ENCODE measurements at regions of chr3 and their contacts with region 1.

Region 1: GRCh38 chr3:8888301-8888915 is 74.9 kb downstream of the RAD18 start:
- DNase-seq: peak; percentile 91
- ATAC-seq: peak; percentile 81
- H3K4me3 ChIP-seq: no peak overlapping the region
- H3K27ac ChIP-seq: peak overlapping the region; percentile 98
- H3K4me1 ChIP-seq: peaks cover 33% of the 10 kb centered on the region
- H3K27me3 ChIP-seq: no peaks in the 10 kb centered on the region
- CTCF ChIP-seq: no peak
- POLR2A ChIP-seq: no peak
- RAD21 ChIP-seq: no peak

Region 2: GRCh38 chr3:8380904-8381704 is 507.3 kb before region 1 on chr3:
- CTCF ChIA-PET with region 1: no interaction called
- POLR2A ChIA-PET with region 1: no interaction called
- dilution Hi-C with region 1: no loop called
- in situ Hi-C with region 1: no loop called
- intact Hi-C with region 1: no loop called
- DNase-seq: no peak
- ATAC-seq: no peak
- H3K4me3 ChIP-seq: no peak overlapping the region
- H3K27ac ChIP-seq: no peak overlapping the region
- H3K4me1 ChIP-seq: no peaks in the 10 kb centered on the region; the same call in 1 of the 2 replicates
- H3K27me3 ChIP-seq: no peaks in the 10 kb centered on the region; the same call in 1 of the 2 replicates
- CTCF ChIP-seq: no peak
- POLR2A ChIP-seq: no peak
- RAD21 ChIP-seq: no peak

Region 3: DNA sequence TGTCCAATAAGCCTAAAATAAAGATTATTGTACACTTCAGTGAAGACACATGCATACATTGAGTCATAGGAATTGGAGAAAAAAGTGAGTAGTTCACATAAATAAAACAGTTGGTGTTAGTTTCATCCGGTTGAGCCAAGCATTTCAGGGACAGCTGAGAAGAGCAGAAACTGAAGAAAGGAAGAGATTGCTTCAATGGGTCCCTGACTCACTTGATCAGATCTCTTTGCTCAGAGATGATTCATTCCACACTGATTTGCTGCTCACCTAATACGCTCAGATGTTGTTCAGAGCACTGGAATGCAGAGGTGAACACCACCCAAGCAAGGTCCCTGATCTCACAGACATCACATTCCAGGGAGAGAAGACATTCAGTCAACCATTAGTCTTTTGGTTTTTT is 18.8 kb before region 1 on chr3:
- CTCF ChIA-PET with region 1: no interaction called
- POLR2A ChIA-PET with region 1: no interaction called
- dilution Hi-C with region 1: no loop called
- in situ Hi-C with region 1: no loop called
- intact Hi-C with region 1: loop called (anchors 1 kb)
- DNase-seq: peak; percentile 99
- ATAC-seq: peak; percentile 91
- H3K4me3 ChIP-seq: no peak overlapping the region
- H3K27ac ChIP-seq: peak overlapping the region; percentile 80
- H3K4me1 ChIP-seq: peaks cover 18% of the 10 kb centered on the region
- H3K27me3 ChIP-seq: no peaks in the 10 kb centered on the region
- CTCF ChIP-seq: no peak
- POLR2A ChIP-seq: no peak
- RAD21 ChIP-seq: 0 out of 2 replicates have a peak, but pooled peaks have one; percentile 5

Region 4: DNA sequence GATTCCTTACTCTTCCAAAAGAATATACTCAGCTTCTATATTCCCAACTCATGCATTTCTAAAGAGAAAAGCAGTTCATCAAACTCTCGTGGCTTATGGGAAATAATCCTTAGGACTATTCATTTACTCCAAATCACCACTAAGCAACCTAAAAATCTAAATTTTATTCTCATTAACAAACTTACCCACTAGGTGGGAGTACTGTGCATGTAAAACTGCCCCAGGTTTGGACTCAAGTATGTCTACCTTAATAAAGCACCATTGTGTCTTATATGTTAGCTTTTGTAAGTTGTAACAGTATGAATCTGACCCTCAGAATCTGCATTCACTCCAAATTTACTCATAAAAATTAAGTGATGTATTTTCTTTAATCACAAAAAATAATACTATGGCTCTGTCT is 49.6 kb after region 1 on chr3:
- CTCF ChIA-PET with region 1: no interaction called
- POLR2A ChIA-PET with region 1: interaction called, 3 read pairs
- dilution Hi-C with region 1: no loop called
- in situ Hi-C with region 1: no loop called
- intact Hi-C with region 1: loop called (anchors 2 kb)
- DNase-seq: peak; percentile 59
- ATAC-seq: peak; percentile 62
- H3K4me3 ChIP-seq: no peak overlapping the region
- H3K27ac ChIP-seq: no peak overlapping the region
- H3K4me1 ChIP-seq: peaks cover 11% of the 10 kb centered on the region; the same call in 1 of the 2 replicates
- H3K27me3 ChIP-seq: no peaks in the 10 kb centered on the region
- CTCF ChIP-seq: peak; percentile 50
- POLR2A ChIP-seq: no peak
- RAD21 ChIP-seq: peak; percentile 51

Region 5: DNA sequence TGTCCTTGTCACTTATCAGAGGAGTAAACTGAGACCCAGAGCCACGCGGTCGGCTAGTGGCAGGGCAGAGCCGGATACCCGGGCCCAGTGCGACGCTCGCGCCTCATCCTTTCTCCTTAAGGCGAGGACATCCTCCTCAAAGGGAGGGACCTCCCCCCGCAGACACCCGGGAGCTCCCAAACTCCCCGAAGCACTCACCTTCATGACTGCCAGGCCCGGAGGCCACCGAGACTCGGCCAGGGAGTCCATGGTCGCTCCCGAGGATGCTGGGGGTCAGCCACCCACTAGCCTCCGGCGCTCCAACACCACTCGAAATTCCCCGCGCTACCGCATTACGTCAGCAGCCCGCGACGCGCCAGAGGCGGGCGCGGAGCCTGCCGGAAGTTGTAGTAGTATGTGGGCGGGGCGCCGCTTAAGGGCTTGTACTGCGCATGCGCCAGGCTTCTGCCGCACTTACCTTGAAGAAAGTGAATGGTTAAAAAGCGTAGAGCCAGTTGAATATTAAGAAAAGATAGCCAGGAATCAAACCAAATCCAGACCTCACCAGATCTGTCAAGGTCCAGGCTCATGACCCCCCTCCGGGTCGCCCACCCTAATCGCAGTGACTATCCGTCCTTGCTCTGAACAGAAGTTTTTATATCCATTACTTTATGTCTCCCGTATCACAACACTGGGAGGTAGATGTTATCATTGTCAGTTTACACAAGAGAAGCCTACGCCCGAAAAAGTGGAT is 74.9 kb after region 1 on chr3 and contains the start of gene RAD18:
- CTCF ChIA-PET with region 1: no interaction called
- POLR2A ChIA-PET with region 1: no interaction called
- dilution Hi-C with region 1: no loop called
- in situ Hi-C with region 1: no loop called
- intact Hi-C with region 1: loop called (anchors 5 kb)
- DNase-seq: peak; percentile 89
- ATAC-seq: peak; percentile 97
- H3K4me3 ChIP-seq: peak within 1 kb of the TSS; percentile 78
- H3K27ac ChIP-seq: peak within 1 kb of the TSS; percentile 55
- H3K4me1 ChIP-seq: peaks cover 5% of the 10 kb centered on the region
- H3K27me3 ChIP-seq: 0 out of 2 replicates have a peak, but pooled peaks cover 2% of the 10 kb centered on the region
- CTCF ChIP-seq: no peak
- POLR2A ChIP-seq: peak; percentile 57
- RAD21 ChIP-seq: no peak
- total RNA-seq, gene RAD18: 17.2 and 22.2 TPM in 2 replicates

Region 6: GRCh38 chr3:9008550-9009255 is 120.3 kb after region 1 on chr3:
- CTCF ChIA-PET with region 1: no interaction called
- POLR2A ChIA-PET with region 1: no interaction called
- dilution Hi-C with region 1: no loop called
- in situ Hi-C with region 1: no loop called
- intact Hi-C with region 1: no loop called
- DNase-seq: no peak
- ATAC-seq: no peak
- H3K4me3 ChIP-seq: no peak overlapping the region
- H3K27ac ChIP-seq: no peak overlapping the region
- H3K4me1 ChIP-seq: no peaks in the 10 kb centered on the region
- H3K27me3 ChIP-seq: peaks cover 5% of the 10 kb centered on the region; the same call in 1 of the 2 replicates
- CTCF ChIP-seq: no peak
- POLR2A ChIP-seq: no peak
- RAD21 ChIP-seq: no peak

Region 7: DNA sequence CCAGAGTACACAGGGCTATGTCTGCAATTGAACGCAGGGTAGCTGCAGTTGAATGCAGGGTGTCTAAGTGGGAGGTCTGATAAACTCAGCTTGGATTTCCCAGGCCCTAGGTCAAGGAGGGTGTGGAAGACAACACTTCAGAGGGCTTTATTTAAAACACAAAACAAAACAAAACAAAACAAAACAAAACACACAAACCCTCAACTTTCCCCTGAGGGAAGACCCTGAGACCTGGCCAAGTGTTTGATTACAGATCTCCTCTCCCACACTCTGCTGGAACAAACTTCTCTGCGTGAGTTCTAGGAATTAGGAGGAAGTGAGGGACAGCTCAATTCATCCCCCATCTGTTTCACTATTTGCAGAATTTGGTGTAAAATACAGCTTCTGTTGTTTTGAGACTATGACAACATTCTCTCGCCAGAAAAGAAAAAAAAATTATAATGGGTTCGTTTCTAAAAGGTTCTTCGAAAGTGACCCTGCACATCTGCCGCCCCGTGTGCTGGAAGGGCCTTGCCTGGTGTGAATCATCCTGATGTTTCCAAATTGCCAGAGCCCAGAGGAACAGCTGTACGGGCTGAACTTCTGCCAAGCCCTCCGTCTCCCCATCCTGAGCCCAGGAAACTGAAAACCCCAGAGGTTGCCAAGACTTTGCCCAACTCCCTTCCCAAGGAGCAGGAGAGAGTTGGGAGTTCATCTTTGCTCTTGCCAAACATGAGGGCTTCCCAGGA is 148.2 kb after region 1 on chr3:
- CTCF ChIA-PET with region 1: no interaction called
- POLR2A ChIA-PET with region 1: no interaction called
- dilution Hi-C with region 1: no loop called
- in situ Hi-C with region 1: no loop called
- intact Hi-C with region 1: no loop called
- DNase-seq: peak; percentile 9
- ATAC-seq: peak; percentile 46
- H3K4me3 ChIP-seq: no peak overlapping the region
- H3K27ac ChIP-seq: no peak overlapping the region
- H3K4me1 ChIP-seq: no peaks in the 10 kb centered on the region
- H3K27me3 ChIP-seq: peaks cover 6% of the 10 kb centered on the region
- CTCF ChIP-seq: no peak
- POLR2A ChIP-seq: no peak
- RAD21 ChIP-seq: no peak

Region 8: GRCh38 chr3:9056581-9056980 is 168.2 kb after region 1 on chr3:
- CTCF ChIA-PET with region 1: no interaction called
- POLR2A ChIA-PET with region 1: no interaction called
- dilution Hi-C with region 1: no loop called
- in situ Hi-C with region 1: no loop called
- intact Hi-C with region 1: no loop called
- DNase-seq: no peak
- ATAC-seq: no peak
- H3K4me3 ChIP-seq: no peak overlapping the region
- H3K27ac ChIP-seq: no peak overlapping the region
- H3K4me1 ChIP-seq: no peaks in the 10 kb centered on the region
- H3K27me3 ChIP-seq: no peaks in the 10 kb centered on the region; the same call in 1 of the 2 replicates
- CTCF ChIP-seq: no peak
- POLR2A ChIP-seq: no peak
- RAD21 ChIP-seq: no peak

Measured in IMR-90 (cell line).